ENCODE measurements at regions of chr11 and their contacts with region 1.

Region 1: DNA sequence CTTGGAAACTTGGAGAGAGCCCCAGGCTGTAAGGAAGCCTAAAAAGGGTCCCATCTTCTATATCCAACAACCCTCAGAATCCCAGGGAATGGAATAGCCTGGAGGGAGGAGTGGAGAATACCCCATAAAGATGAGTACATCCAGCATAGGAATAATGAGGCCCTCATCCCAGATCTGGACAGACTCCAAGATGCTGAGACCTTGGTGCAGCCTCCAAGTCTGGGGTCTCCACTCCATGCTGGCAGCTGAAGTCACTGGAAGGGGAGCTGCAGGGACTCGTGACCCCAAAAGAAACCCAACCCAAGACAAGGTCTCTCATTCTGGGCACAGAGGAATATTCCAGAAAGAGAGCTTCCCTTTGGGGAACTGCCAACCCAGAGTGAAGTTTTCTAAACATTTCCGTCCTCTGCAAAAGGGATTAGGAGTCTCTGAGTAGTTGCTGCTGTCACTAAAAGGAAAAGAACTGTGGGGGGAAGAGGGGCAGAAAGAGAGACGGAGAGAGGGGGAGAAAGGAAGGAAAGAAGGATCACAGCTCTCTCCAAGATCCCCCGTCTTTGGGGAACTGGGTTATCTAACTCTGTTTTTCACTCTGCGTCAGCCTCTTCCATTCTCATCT is 589 bp downstream of the SCGB1A1 start:
- DNase-seq: no peak
- H3K4me3 Mint-ChIP-seq: no peak overlapping the region
- H3K27ac Mint-ChIP-seq: peak overlapping the region; percentile 60
- H3K4me1 Mint-ChIP-seq: peaks cover 2% of the 10 kb centered on the region
- H3K27me3 Mint-ChIP-seq: peaks cover 13% of the 10 kb centered on the region

Region 2: GRCh38 chr11:62123669-62124185 is 295.7 kb before region 1 on chr11 and contains the start of gene INCENP:
- CTCF ChIA-PET with region 1: no interaction called
- POLR2A ChIA-PET with region 1: no interaction called
- DNase-seq: peak; percentile 98
- H3K4me3 Mint-ChIP-seq: peak within 1 kb of the TSS; percentile 80
- H3K27ac Mint-ChIP-seq: peak within 1 kb of the TSS; percentile 96
- H3K4me1 Mint-ChIP-seq: peaks cover 39% of the 10 kb centered on the region
- H3K27me3 Mint-ChIP-seq: peaks cover 3% of the 10 kb centered on the region
- total RNA-seq, gene INCENP: 200 to 204 TPM

Region 3: DNA sequence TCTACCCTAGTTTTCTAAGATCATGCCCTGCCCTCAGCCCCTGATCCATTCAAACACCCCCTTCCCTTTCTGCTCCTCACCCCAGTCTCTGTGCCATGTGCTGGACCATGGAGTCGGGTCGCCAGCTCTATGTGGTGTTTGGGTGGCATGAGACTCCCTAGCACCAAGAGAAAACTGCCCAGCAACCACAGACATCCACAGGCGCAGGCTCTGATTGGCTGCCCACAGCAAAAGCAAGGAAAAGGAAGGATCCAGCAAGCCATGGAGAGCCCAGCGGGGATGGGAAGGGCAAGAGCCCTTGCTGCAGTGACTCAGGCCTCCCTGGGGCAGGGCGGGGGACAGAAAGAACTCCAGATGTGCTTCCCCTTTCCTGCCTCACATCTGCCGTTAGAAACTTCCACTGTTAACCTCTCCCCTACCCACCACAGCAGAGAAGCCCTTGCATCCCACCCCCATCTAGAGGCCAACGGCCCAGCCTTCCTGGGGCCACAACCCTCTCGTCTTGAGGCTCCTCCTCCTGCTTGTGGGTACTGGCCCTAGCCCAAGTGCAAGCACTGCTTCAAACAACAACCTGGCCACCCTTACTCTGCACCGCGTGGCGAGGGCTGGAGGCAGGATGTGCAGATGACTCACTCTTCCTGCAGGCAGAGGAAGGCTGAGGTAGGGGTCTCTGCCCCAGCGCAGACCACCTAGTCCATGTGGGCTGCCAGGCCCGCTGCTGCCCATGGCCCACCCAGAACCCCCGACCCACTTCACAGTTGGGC is 136.9 kb after region 1 on chr11:
- CTCF ChIA-PET with region 1: interaction called, 85 read pairs
- POLR2A ChIA-PET with region 1: interaction called, 3 read pairs
- DNase-seq: peak; percentile 92
- H3K4me3 Mint-ChIP-seq: peak overlapping the region; percentile 75
- H3K27ac Mint-ChIP-seq: peak overlapping the region; percentile 99
- H3K4me1 Mint-ChIP-seq: peaks cover 95% of the 10 kb centered on the region
- H3K27me3 Mint-ChIP-seq: no peaks in the 10 kb centered on the region

Region 4: GRCh38 chr11:62573592-62574362 is 154.4 kb after region 1 on chr11 and contains the start of gene EEF1G:
- CTCF ChIA-PET with region 1: interaction called, 11 read pairs
- POLR2A ChIA-PET with region 1: no interaction called
- DNase-seq: peak; percentile 99
- H3K4me3 Mint-ChIP-seq: peak within 1 kb of the TSS; percentile 96
- H3K27ac Mint-ChIP-seq: peak within 1 kb of the TSS; percentile 94
- H3K4me1 Mint-ChIP-seq: peaks cover 56% of the 10 kb centered on the region
- H3K27me3 Mint-ChIP-seq: no peaks in the 10 kb centered on the region
- total RNA-seq, gene EEF1G: 1,239 to 1,470 TPM

Measured in activated CD4-positive, alpha-beta T cell treated with anti-CD3 and anti-CD28 coated beads, Interleukin-2, amount 10 ng/mL, durations not matched to agents 7 days and 5 days (primary cell).